Panc1 (cell line): ENCODE measurements at regions of chr15 and their contacts with region 1.

Region 1: GRCh38 chr15:22838292-22839042 is at the start of gene NIPA2:
- DNase-seq: peak; percentile 91
- ATAC-seq: peak; percentile 96
- H3K4me3 ChIP-seq: peak within 1 kb of the TSS; percentile 53 to 98
- H3K27ac ChIP-seq: peak within 1 kb of the TSS; percentile 95
- H3K4me1 ChIP-seq: peaks cover 4% of the 10 kb centered on the region; the same call in 1 of the 2 replicates
- H3K27me3 ChIP-seq: no peaks in the 10 kb centered on the region
- CTCF ChIP-seq: no peak
- total RNA-seq, gene NIPA2: 94.8 TPM

Region 2: GRCh38 chr15:22799902-22800301 is 38.6 kb before region 1 on chr15:
- CTCF ChIA-PET with region 1: no interaction called
- POLR2A ChIA-PET with region 1: interaction called, 4 read pairs
- in situ Hi-C with region 1: no loop called
- intact Hi-C with region 1: loop called (anchors 2 kb)
- DNase-seq: no peak
- ATAC-seq: no peak
- H3K4me3 ChIP-seq: no peak overlapping the region
- H3K27ac ChIP-seq: no peak overlapping the region
- H3K4me1 ChIP-seq: peaks cover 5% of the 10 kb centered on the region; the same call in 1 of the 2 replicates
- H3K27me3 ChIP-seq: no peaks in the 10 kb centered on the region
- CTCF ChIP-seq: no peak

Region 3: GRCh38 chr15:22888120-22888859 is 49.8 kb after region 1 on chr15:
- CTCF ChIA-PET with region 1: no interaction called
- POLR2A ChIA-PET with region 1: no interaction called
- in situ Hi-C with region 1: no loop called
- intact Hi-C with region 1: no loop called
- DNase-seq: no peak
- ATAC-seq: no peak
- H3K4me3 ChIP-seq: no peak overlapping the region
- H3K27ac ChIP-seq: no peak overlapping the region
- H3K4me1 ChIP-seq: no peaks in the 10 kb centered on the region
- H3K27me3 ChIP-seq: no peaks in the 10 kb centered on the region
- CTCF ChIP-seq: no peak